Activated T-helper 1 cell treated with anti-CD3 and anti-CD28 coated beads, Interleukin-12 subunit alpha, Interleukin-12 subunit beta, Interleukin-2, Interleukin-4 antibody, amounts not matched to agents 30 ng/mL and 10 ng/mL and 1 ng/mL, durations not matched to agents 14 hours and 24 hours and 36 hours (primary cell): ENCODE measurements at regions of chr3 and their contacts with region 1.

Region 1: DNA sequence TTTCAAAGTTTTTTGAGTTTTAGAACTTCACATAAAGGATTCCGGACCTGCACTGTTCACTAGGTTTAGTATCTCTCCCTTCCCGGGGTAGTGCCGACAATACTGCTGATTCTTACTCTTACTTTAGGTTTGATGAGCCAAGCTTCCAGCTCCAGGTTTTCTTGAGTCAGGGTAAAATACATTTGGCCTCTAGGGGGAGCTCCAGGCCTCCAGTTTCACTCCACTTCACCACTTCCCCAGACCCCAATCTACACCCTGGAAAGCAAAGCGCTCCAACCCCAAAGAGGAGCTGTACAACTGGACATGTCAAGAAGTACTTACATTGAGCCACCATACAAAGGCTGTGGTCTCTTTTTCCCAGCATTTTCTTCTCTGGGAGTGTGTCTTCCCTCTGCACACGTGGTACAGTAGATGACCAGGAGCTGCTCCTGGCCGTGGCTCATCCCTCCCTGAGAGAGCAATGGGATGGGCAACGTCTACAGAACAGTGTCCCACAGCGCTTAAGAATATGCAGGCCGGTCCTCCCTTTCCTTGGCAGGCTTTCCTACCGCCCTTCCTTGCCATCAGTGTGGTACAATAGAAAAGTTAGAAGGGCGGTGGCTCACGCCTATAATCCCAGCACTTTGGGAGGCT is 93.9 kb upstream of the CCDC80 start:
- DNase-seq: peak; percentile 43
- H3K4me3 Mint-ChIP-seq: no peak overlapping the region
- H3K27ac Mint-ChIP-seq: no peak overlapping the region
- H3K4me1 Mint-ChIP-seq: peaks cover 47% of the 10 kb centered on the region
- H3K27me3 Mint-ChIP-seq: peaks cover 2% of the 10 kb centered on the region

Region 2: DNA sequence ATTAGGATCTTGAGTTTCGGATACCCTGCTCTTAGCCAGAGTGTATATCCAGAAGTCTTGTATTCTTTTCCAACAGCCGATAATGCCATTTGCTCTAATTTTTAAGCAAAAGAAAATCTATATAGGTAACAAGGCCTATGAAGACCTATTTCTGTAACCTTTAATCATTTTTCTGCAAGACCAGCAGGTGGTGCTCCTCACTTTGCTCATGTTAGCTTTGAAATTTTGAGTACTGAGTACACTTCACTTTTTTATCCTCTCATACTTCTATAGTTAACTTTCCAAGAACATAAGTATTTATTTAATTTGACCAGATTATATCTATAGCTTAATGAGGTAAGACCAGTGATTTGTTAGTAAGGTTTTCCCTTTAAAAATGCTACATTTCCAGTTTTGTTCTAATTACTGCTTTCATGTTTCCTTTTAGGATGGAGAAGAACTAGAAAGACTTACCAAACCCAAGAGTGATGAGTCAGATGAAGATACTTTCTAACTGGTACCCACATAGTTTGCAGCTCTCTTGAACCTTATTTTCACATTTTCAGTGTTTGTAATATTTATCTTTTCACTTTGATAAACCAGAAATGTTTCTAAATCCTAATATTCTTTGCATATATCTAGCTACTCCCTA is 152.5 kb before region 1 on chr3:
- intact Hi-C with region 1: loop called (anchors 1 kb)
- DNase-seq: no peak
- H3K4me3 Mint-ChIP-seq: no peak overlapping the region
- H3K27ac Mint-ChIP-seq: no peak overlapping the region
- H3K4me1 Mint-ChIP-seq: peaks cover 6% of the 10 kb centered on the region
- H3K27me3 Mint-ChIP-seq: no peaks in the 10 kb centered on the region

Region 3: GRCh38 chr3:112814266-112814665 is 79.4 kb after region 1 on chr3:
- intact Hi-C with region 1: loop called (anchors 1 kb)
- DNase-seq: no peak
- H3K4me3 Mint-ChIP-seq: no peak overlapping the region
- H3K27ac Mint-ChIP-seq: no peak overlapping the region
- H3K4me1 Mint-ChIP-seq: peaks cover 33% of the 10 kb centered on the region
- H3K27me3 Mint-ChIP-seq: peaks cover 3% of the 10 kb centered on the region

Region 4: GRCh38 chr3:112894258-112894657 is 159.4 kb after region 1 on chr3:
- intact Hi-C with region 1: no loop called
- DNase-seq: no peak
- H3K4me3 Mint-ChIP-seq: no peak overlapping the region
- H3K27ac Mint-ChIP-seq: no peak overlapping the region
- H3K4me1 Mint-ChIP-seq: no peaks in the 10 kb centered on the region
- H3K27me3 Mint-ChIP-seq: peaks cover 10% of the 10 kb centered on the region

Region 5: GRCh38 chr3:112979240-112979832 is 244.5 kb after region 1 on chr3:
- intact Hi-C with region 1: loop called (anchors 1 kb)
- DNase-seq: no peak
- H3K4me3 Mint-ChIP-seq: no peak overlapping the region
- H3K27ac Mint-ChIP-seq: no peak overlapping the region
- H3K4me1 Mint-ChIP-seq: peaks cover 67% of the 10 kb centered on the region
- H3K27me3 Mint-ChIP-seq: no peaks in the 10 kb centered on the region

Region 6: GRCh38 chr3:113287803-113288648 is 553.2 kb after region 1 on chr3:
- intact Hi-C with region 1: loop called (anchors 2 kb)
- DNase-seq: peak; percentile 10
- H3K4me3 Mint-ChIP-seq: no peak overlapping the region
- H3K27ac Mint-ChIP-seq: no peak overlapping the region
- H3K4me1 Mint-ChIP-seq: peaks cover 6% of the 10 kb centered on the region
- H3K27me3 Mint-ChIP-seq: peaks cover 2% of the 10 kb centered on the region